ENCODE measurements at regions of chr15 and their contacts with region 1.

Region 1: GRCh38 chr15:68644077-68644904 is 65.5 kb downstream of the CORO2B start:
- DNase-seq: no peak
- ATAC-seq: no peak
- H3K4me3 ChIP-seq: no peak overlapping the region
- H3K27ac ChIP-seq: no peak overlapping the region
- H3K4me1 ChIP-seq: no peaks in the 10 kb centered on the region
- H3K27me3 ChIP-seq: no peaks in the 10 kb centered on the region
- CTCF ChIP-seq: no peak
- POLR2A ChIP-seq: no peak

Region 2: DNA sequence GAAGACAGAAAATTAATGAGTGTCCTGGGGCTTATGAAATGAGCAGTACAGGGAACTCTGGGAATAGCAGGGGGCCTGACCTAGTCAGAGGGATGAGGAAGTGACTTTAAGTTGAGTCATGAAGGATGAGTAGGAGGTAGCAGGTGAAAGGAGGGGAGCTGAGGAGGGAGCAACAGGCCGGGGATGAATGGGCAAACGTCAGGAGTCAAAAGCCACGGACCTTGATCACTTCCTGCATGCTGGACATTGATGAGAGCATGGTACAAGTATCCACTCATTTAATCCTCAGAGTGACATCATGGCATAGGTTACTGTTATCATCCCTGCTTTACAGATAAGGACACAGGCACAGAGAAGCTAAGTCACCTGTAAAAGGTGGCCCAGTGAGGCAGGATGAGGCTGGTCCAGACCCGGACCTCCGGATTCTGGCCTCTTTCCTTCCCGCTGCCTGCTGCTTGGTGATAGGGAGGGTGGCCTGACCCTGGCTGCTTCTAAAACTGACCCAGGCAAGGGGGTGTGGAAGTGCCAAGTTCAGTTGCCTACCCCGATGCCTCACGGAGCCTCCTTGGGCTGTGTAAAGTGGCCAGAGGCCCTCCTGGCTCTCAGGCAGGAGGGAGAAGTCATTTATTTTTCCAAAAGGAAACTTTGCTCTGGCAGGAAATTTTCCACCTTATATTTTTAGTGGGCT is 57.9 kb before region 1 on chr15:
- intact Hi-C with region 1: loop called in 1 of 2 experiments (anchors 10 kb)
- DNase-seq: peak in 1 of 3 donors; percentile 24
- ATAC-seq: peak in 1 of 4 donors; percentile 76
- H3K4me3 ChIP-seq: no peak overlapping the region
- H3K27ac ChIP-seq: no peak overlapping the region
- H3K4me1 ChIP-seq: peaks cover 0 to 5% (median 0%) of the 10 kb centered on the region in 4 donors
- H3K27me3 ChIP-seq: no peaks in the 10 kb centered on the region
- CTCF ChIP-seq: no peak
- POLR2A ChIP-seq: no peak

Measured in right lobe of liver (tissue), 6 donors.